ENCODE measurements at regions of chr20 and their contacts with region 1.

Region 1: GRCh38 chr20:38057351-38057972 is 23.9 kb downstream of the RPRD1B start:
- DNase-seq: peak; percentile 78 to 88 (median 80)
- ATAC-seq: peak; percentile 99
- H3K4me3 ChIP-seq: no peak overlapping the region
- H3K27ac ChIP-seq: no peak overlapping the region
- H3K4me1 ChIP-seq: no peaks in the 10 kb centered on the region
- H3K27me3 ChIP-seq: no peaks in the 10 kb centered on the region
- CTCF ChIP-seq: peak; percentile 76 to 90 (median 83)
- EP300 ChIP-seq: no peak
- POLR2A ChIP-seq: no peak
- RAD21 ChIP-seq: peak; percentile 82 to 90

Region 2: DNA sequence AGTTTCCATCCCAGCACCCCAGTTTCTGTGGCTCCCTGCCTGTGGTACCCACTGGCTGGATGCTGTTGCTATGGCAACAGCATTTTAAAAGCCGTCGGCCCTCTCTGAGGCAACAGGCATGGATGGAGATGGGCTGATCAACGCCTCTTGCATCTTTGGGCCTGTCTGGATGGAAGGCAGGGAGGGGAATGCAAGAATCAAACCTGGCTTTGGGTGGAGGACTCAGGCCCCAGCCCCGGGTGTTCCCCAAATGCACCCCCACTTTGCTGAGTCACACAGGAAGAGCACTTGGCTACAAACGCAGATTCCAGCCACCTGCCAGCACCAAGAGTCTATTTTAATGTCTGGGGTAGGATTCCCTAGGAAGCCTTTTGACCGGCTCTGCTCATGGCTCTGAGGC is 153.3 kb after region 1 on chr20:
- CTCF ChIA-PET with region 1: no interaction called
- POLR2A ChIA-PET with region 1: no interaction called
- in situ Hi-C with region 1: loop called (anchors 5 kb)
- intact Hi-C with region 1: no loop called
- DNase-seq: peak in 2 of 4 experiments; percentile 54 to 55
- ATAC-seq: no peak
- H3K4me3 ChIP-seq: no peak overlapping the region
- H3K27ac ChIP-seq: no peak overlapping the region
- H3K4me1 ChIP-seq: peaks cover 0 to 7% of the 10 kb centered on the region in 2 experiments; a peak in 1 of 5 replicates
- H3K27me3 ChIP-seq: peaks cover 10 to 31% of the 10 kb centered on the region in 2 experiments; a peak in 4 of 5 replicates
- CTCF ChIP-seq: no peak
- EP300 ChIP-seq: no peak
- POLR2A ChIP-seq: no peak
- RAD21 ChIP-seq: no peak